G401 (cell line): ENCODE measurements at regions of chr11 and their contacts with region 1.

Region 1: GRCh38 chr11:76444384-76445123 is at the start of gene EMSY:
- DNase-seq: peak; percentile 100
- total RNA-seq, gene EMSY: 6.3 and 12.8 TPM in 2 replicates

Region 2: DNA sequence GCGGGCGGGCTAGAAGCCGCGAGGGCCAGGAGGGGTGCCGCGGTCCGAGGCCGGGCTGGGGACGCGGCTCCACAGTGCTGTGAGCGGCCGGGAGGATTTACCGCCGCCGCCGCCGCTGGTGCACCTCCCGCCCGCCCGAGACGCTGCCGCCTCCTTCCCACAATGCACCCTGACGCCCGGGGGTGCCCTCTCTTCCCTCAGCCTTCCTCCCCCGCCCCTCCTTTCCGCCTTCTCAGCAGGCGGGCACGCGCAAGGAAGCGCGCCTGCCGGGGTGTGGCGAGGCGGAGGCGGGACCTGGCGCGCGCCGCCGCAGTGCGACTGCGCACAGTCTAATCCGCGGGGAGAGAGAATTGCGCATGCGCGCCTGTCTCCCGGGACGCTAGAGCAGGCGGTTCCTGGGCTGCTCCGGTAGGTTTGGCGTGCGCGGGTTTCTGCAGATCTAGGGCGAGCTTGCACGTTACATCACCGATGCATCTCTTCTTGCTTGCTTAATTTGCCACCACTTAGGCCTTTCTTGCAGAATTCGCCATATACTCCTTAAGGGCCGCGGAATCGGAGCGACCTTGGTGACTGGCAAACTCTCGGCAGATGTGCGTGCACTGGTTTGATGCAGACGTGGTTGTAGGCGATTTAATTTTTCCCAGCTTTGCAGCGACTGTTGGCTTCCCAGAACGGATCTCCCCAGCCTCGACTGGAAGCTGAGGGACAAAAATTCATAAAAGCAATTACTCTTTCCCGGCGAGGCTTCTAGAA is 63.4 kb before region 1 on chr11 and contains the starts of genes GVQW3 and THAP12:
- in situ Hi-C with region 1: loop called (anchors 10 kb)
- DNase-seq: peak; percentile 96
- total RNA-seq, gene GVQW3: 1.4 and 5.2 TPM in 2 replicates
- total RNA-seq, gene THAP12: 62.3 and 82.0 TPM in 2 replicates